Activated naive CD4-positive, alpha-beta T cell treated with anti-CD3 and anti-CD28 coated beads for 36 hours (primary cell): ENCODE measurements at regions of chr1 and their contacts with region 1.

Region 1: GRCh38 chr1:2586154-2587070 is at the start of gene PRXL2B:
- DNase-seq: peak; percentile 99
- H3K4me3 Mint-ChIP-seq: peak within 1 kb of the TSS; percentile 80
- H3K27ac Mint-ChIP-seq: peak within 1 kb of the TSS; percentile 91
- H3K4me1 Mint-ChIP-seq: peaks cover 46% of the 10 kb centered on the region
- H3K27me3 Mint-ChIP-seq: no peaks in the 10 kb centered on the region
- total RNA-seq, gene PRXL2B: 21.8 to 22.1 TPM

Region 2: GRCh38 chr1:2290595-2291510 is 295.6 kb before region 1 on chr1:
- CTCF ChIA-PET with region 1: no interaction called
- intact Hi-C with region 1: loop called (anchors 10 kb)
- DNase-seq: peak; percentile 96
- H3K4me3 Mint-ChIP-seq: peak overlapping the region; percentile 72
- H3K27ac Mint-ChIP-seq: peak overlapping the region; percentile 99
- H3K4me1 Mint-ChIP-seq: peaks cover 84% of the 10 kb centered on the region
- H3K27me3 Mint-ChIP-seq: no peaks in the 10 kb centered on the region

Region 3: DNA sequence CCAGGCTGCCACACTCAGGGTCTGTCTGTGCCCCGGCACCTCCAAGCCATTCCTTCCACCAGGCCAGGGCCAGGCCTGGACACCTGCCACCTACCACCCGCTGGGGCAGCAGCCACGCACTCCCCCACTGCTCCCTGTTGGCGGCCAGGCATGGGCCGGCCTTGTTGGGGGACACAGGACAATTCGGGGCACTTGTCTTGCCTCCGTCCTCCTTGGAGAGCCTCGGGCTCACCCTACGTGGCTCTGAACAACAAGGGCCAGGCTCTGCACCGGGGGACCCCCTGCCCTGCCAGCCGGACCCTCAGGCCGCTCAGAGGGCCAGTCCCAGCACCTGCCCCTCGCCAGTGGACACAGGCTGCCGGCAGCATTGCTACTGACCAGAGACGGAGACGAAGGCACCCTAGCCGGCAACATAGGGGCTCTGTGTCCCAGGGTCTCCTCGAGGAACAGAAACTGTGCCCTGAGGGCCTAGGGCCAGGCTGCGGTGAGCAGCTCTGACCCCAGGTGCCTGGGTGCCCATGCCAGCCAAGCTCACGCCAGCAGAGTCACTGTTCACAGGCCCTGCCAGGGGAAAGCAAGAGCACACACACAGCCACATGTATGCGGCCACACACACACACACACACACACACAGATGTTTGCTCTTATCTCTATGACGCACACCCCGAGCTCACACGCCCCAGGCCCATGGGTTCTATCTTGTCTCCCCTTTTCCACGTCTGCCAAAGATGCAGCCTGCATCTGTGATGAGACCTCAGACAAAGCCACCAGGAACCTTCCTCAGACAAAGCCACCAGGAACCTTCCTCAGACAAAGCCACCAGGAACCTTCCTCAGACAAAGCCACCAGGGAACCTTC is 241.0 kb before region 1 on chr1:
- CTCF ChIA-PET with region 1: no interaction called
- intact Hi-C with region 1: no loop called
- DNase-seq: no peak
- H3K4me3 Mint-ChIP-seq: no peak overlapping the region
- H3K27ac Mint-ChIP-seq: no peak overlapping the region
- H3K4me1 Mint-ChIP-seq: no peaks in the 10 kb centered on the region
- H3K27me3 Mint-ChIP-seq: no peaks in the 10 kb centered on the region

Region 4: GRCh38 chr1:2451744-2452143 is 134.7 kb before region 1 on chr1:
- CTCF ChIA-PET with region 1: no interaction called
- intact Hi-C with region 1: no loop called
- DNase-seq: no peak
- H3K4me3 Mint-ChIP-seq: no peak overlapping the region
- H3K27ac Mint-ChIP-seq: no peak overlapping the region
- H3K4me1 Mint-ChIP-seq: no peaks in the 10 kb centered on the region
- H3K27me3 Mint-ChIP-seq: no peaks in the 10 kb centered on the region

Region 5: DNA sequence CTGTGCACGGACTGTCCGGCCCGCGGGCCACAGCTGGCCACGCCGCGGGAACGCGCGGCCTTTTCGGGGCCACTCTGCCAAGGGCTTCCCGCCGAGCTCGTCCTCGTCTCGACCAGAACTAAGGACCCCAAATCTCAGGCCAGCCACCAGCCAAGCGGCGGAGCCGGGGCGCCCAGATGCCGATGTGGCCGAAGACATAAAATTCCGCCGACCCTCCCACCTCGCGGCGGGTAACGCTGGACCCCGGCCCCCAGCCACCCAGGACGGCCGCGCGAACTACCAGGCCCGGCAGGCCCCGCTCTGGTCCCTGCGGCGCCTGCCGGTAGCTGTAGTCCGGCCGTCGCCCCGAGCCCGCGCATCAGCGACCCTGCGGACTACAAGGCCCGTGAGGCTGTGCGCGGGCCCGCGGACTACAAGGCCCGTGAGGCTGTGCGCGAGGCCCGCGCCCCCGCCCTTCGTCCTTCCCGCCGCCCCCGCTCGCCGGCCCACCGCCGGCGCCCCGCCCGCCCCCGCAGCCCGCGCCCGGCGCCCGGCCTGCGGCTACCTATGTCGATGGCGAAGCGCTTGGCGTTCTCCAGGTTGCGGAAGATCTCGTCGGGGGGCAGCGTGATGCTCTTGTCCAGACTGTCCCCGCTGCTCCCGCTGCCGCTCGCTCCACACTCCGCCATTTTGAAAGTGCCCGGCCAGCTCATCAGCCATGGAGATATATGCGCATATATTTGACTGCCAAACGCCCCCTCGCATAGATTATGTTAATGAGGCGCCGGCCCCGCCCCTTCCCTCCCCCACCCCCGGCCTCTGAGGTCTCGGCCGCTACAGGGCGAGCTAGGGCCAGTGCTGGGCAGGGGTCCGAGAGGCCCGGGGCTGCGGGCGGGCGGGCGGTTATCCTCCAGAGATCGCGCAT is 60.2 kb before region 1 on chr1 and contains the start of gene PANK4:
- CTCF ChIA-PET with region 1: no interaction called
- intact Hi-C with region 1: loop called (anchors 1 kb)
- DNase-seq: peak; percentile 90
- H3K4me3 Mint-ChIP-seq: peak within 1 kb of the TSS; percentile 87
- H3K27ac Mint-ChIP-seq: peak within 1 kb of the TSS; percentile 97
- H3K4me1 Mint-ChIP-seq: peaks cover 47% of the 10 kb centered on the region
- H3K27me3 Mint-ChIP-seq: peaks cover 3% of the 10 kb centered on the region
- total RNA-seq, gene PANK4: 46.6 to 51.4 TPM

Region 6: DNA sequence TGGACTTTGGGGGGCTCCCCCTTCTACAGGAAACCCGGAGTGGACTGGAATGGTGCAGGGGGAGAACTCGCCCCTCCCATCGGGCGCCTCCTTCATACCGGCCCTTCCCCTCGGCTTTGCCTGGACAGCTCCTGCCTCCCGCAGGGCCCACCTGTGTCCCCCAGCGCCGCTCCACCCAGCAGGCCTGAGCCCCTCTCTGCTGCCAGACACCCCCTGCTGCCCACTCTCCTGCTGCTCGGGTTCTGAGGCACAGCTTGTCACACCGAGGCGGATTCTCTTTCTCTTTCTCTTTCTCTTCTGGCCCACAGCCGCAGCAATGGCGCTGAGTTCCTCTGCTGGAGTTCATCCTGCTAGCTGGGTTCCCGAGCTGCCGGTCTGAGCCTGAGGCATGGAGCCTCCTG is 30.1 kb before region 1 on chr1 and contains the start of gene TNFRSF14:
- CTCF ChIA-PET with region 1: interaction called, 11 read pairs
- intact Hi-C with region 1: loop called (anchors 1 kb)
- DNase-seq: peak; percentile 81
- H3K4me3 Mint-ChIP-seq: peak within 1 kb of the TSS; percentile 93
- H3K27ac Mint-ChIP-seq: peak within 1 kb of the TSS; percentile 99
- H3K4me1 Mint-ChIP-seq: peaks cover 31% of the 10 kb centered on the region
- H3K27me3 Mint-ChIP-seq: no peaks in the 10 kb centered on the region
- total RNA-seq, gene TNFRSF14: 120 to 123 TPM

Region 7: GRCh38 chr1:2575801-2576663 is 10.4 kb before region 1 on chr1:
- CTCF ChIA-PET with region 1: interaction called, 4 read pairs
- intact Hi-C with region 1: loop called (anchors 1 kb)
- DNase-seq: no peak
- H3K4me3 Mint-ChIP-seq: no peak overlapping the region
- H3K27ac Mint-ChIP-seq: peak overlapping the region; percentile 97
- H3K4me1 Mint-ChIP-seq: peaks cover 40% of the 10 kb centered on the region
- H3K27me3 Mint-ChIP-seq: no peaks in the 10 kb centered on the region

Region 8: GRCh38 chr1:2642560-2643413 is 56.4 kb after region 1 on chr1:
- CTCF ChIA-PET with region 1: interaction called, 3 read pairs
- intact Hi-C with region 1: loop called (anchors 1 kb)
- DNase-seq: peak; percentile 97
- H3K4me3 Mint-ChIP-seq: peak overlapping the region; percentile 90
- H3K27ac Mint-ChIP-seq: peak overlapping the region; percentile 88
- H3K4me1 Mint-ChIP-seq: peaks cover 6% of the 10 kb centered on the region
- H3K27me3 Mint-ChIP-seq: no peaks in the 10 kb centered on the region